ENCODE measurements at regions of chr3 and their contacts with region 1.

Region 1: DNA sequence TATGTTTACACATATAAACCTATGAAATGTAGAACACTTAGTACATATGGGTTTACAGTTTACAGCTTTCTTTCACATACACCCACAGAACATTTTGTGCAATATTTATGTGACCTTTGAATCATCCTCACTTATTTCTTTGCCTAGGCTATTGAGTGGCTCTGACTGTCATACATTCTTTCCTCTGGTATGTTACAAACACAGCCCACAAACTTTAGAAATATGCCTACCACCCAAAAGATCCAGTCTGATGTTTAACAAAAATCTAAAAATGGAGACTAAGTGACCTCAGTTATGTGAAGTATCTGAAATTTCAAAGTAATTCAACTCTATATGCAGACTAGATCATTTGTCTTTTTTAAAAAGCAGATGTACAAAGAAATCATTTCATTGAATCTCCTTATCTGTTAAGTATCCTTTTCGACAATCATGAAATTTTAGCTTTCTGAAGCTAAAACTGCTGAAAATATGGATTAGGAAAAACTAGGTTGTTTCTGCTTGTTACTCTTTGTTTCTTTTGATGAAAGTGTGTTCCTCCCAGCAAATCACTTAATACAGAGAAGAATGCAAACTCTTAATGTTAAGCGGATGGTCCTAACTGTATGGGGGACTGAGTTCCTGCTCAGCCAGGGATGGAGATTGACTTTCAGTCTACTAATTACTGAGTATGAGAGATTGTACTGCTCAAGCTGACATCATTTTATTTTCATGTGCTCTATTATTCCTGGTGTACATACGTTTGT is 27.7 kb downstream of the CCDC54 start:
- DNase-seq: peak; percentile 59
- H3K4me3 ChIP-seq: no peak overlapping the region
- H3K27me3 ChIP-seq: no peaks in the 10 kb centered on the region
- CTCF ChIP-seq: no peak

Region 2: GRCh38 chr3:107421170-107421792 is 16.4 kb after region 1 on chr3:
- CTCF ChIA-PET with region 1: interaction called, 16 read pairs
- POLR2A ChIA-PET with region 1: no interaction called
- DNase-seq: no peak
- H3K4me3 ChIP-seq: 0 out of 2 replicates have a peak overlapping the region, but pooled peaks have one; percentile 22
- H3K27me3 ChIP-seq: no peaks in the 10 kb centered on the region
- CTCF ChIP-seq: peak; percentile 65

Region 3: DNA sequence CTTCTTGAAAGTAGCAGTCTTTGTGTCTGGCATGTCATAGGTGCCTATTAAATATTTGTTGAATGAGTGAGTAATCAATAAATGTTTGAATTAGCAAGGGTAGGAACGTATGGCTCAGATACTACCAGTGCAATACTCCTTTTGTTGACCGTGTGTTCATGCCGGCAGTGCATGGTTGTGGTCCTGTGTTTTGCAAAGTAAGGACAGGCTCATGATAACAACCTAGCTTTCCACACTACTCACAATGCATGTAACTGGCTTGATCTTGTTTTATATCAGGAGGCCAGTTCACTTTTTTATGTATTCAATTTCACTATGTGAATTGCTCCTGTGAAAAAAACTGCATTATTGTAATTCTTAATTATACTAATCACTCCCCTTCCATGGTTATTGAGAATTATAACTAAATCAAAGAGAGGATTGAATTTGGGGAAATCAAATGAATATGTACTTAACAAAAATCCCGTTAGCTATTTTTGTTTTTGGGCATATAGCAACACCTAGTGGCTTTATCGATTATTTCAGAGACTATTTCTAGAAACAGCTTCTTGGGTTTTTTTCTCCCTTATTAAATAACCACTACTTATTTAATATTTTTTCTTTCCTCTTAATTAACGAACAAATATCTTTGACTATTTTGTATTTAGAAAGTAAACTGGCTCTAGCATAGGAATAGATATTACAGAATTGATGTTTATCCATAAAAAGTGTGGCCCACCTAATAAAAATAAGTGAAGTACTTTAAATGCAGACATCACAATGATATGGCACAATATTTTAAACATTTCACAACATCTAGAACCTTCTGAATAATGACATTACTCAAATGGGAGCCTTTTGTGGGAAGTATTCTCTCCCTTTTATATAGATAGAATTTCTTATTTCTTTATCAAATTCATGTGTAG is 336.3 kb after region 1 on chr3:
- CTCF ChIA-PET with region 1: no interaction called
- POLR2A ChIA-PET with region 1: no interaction called
- DNase-seq: no peak
- H3K4me3 ChIP-seq: no peak overlapping the region
- H3K27me3 ChIP-seq: no peaks in the 10 kb centered on the region
- CTCF ChIP-seq: peak; percentile 46

Region 4: GRCh38 chr3:107816107-107816506 is 411.2 kb after region 1 on chr3:
- CTCF ChIA-PET with region 1: no interaction called
- POLR2A ChIA-PET with region 1: no interaction called
- DNase-seq: no peak
- H3K4me3 ChIP-seq: no peak overlapping the region
- H3K27me3 ChIP-seq: no peaks in the 10 kb centered on the region
- CTCF ChIP-seq: no peak

Measured in BJ (cell line).